Left colon (tissue), 2 donors: ENCODE measurements at regions of chr5 and their contacts with region 1.

Region 1: DNA sequence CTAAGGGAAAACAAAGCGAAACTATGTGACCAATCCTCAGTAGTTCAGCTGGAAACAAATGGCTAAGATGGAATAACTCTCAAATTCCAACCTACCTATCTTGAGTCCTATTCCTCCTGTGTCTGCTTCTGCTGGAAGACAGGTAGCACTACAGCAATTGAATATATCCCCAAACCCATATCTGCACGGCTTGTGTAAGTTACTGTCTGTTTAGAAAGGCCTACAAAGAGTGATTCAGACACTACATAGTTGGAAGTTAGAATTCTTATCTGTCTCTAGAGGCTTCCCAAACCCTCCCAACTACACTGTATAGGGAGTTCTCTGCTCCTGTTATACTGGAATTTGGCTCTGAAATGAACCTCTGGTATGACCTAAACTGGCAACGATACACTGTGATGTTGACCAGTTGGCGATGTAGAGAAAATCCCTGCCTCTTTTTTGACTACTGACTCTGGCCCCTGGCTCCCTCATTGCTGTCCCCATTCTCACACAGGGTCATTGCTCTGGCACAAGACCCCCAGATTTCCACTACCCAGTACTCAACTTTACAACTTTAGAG is 22.6 kb upstream of the NADK2 start:
- DNase-seq: no peak
- ATAC-seq: no peak

Region 2: GRCh38 chr5:36029914-36030313 is 234.4 kb before region 1 on chr5:
- intact Hi-C with region 1: no loop called
- DNase-seq: no peak
- ATAC-seq: no peak

Region 3: GRCh38 chr5:36301858-36302603 is 37.8 kb after region 1 on chr5 and contains the start of gene RANBP3L:
- intact Hi-C with region 1: loop called in 1 of 2 experiments (anchors 5 kb)
- DNase-seq: peak in 1 of 2 donors; percentile 4
- ATAC-seq: peak; percentile 91
- total RNA-seq, gene RANBP3L: 0.17 TPM in 1 of 2 donors, not detected in the other

Region 4: GRCh38 chr5:36389245-36389644 is 125.0 kb after region 1 on chr5:
- intact Hi-C with region 1: loop called in 1 of 2 experiments (anchors 10 kb)
- DNase-seq: peak in 1 of 2 donors; percentile 6
- ATAC-seq: no peak